ENCODE measurements at regions of chr6 and their contacts with region 1.

Region 1: DNA sequence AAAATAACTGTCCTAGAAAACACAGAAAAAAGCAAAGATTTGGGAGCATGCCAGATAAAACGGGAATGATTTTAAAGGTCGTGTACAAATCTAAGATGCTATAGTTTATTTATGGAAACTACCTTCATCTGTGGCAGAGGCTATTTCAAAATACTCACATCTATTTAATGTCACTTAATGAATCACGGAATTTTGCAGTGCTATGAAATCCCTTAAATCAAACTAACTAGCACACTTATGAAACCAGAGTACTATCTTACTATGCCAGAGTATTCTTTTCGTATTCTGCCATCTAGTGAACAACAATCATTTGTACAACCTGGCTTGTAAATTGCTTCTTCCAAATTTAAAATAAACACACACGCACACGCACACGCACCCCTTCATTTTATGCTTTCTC is 77.9 kb upstream of the BMP5 start:
- DNase-seq: no peak
- ATAC-seq: peak; percentile 60
- H3K4me3 ChIP-seq: no peak overlapping the region
- H3K27ac ChIP-seq: no peak overlapping the region
- H3K4me1 ChIP-seq: no peaks in the 10 kb centered on the region
- H3K27me3 ChIP-seq: no peaks in the 10 kb centered on the region
- CTCF ChIP-seq: peak in 5 of 7 experiments; percentile 39 to 66 (median 56)
- POLR2A ChIP-seq: no peak

Region 2: DNA sequence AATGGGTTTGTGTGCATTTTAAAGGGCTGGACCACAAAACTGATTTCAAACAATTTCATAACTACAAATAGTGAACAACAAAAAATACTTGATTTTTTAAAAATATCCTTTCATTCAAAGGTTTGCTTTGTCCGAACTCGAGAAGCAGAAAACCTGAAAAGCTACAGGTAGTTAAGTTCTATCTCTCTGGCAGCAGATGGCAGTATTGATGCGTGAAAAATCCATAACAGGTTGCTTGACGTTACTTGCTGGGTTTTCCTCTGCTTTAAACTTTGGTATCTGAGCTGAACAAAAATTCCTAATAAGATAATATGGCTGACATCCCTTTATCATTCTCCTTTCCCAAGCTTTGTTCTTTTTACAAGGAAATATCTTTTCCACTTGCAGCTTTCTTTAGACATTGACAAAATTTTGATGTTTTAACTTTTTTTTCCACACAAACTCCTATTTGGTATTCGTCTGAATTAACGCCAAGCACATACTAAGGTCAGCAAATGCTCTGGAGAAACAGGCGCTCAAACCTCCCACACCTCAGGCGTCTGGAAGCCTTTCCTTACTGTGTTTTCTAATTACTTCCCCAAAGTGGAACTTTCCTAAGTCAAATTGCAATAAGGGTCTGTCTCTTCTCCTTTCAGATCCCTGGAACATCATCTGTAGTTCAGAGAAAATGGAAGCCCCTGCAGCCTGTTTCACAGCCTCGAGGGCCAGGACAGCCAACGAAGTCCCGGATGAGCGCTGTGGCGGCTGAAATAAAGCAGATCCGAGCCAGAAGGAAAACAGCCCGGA is 676.4 kb before region 1 on chr6:
- intact Hi-C with region 1: loop called (anchors 10 kb)
- DNase-seq: peak; percentile 9 to 56 (median 22)
- ATAC-seq: peak; percentile 73
- H3K4me3 ChIP-seq: no peak overlapping the region
- H3K27ac ChIP-seq: no peak overlapping the region
- H3K4me1 ChIP-seq: no peaks in the 10 kb centered on the region
- H3K27me3 ChIP-seq: peaks cover 0 to 6% of the 10 kb centered on the region in 2 donors
- CTCF ChIP-seq: peak; percentile 15 to 67 (median 59)
- POLR2A ChIP-seq: no peak

Region 3: DNA sequence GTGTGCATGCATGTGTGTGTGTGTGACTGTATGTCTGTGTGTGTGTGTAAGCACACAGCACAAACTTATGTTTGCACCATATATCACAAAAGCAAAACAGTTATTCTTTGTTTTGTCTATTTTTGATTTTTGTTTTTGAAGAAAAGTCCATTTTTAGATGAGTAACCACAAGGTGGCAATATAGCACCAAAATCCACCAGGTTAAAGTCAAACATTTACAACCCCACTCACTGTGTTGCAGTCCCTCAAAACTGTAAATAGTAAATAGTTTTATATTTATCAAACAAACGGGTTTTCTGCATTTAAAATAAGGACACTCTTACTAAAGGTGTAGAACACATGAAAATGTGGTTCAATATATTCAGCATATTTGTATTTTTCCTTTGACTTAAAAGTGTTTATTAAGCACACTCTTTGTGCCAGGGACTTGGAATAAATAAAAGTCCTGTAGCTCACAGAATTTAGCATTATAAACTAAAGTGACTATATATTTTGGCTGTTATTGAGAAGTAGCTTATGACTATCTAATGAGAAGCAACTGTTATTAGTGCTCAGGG is 507.6 kb before region 1 on chr6:
- intact Hi-C with region 1: loop called (anchors 10 kb)
- DNase-seq: no peak
- ATAC-seq: peak; percentile 47
- H3K4me3 ChIP-seq: no peak overlapping the region
- H3K27ac ChIP-seq: no peak overlapping the region
- H3K4me1 ChIP-seq: peaks cover 22% of the 10 kb centered on the region
- H3K27me3 ChIP-seq: no peaks in the 10 kb centered on the region
- CTCF ChIP-seq: peak in 6 of 7 experiments; percentile 39 to 65 (median 56)
- POLR2A ChIP-seq: no peak

Region 4: GRCh38 chr6:56659721-56660380 is 706.5 kb after region 1 on chr6:
- intact Hi-C with region 1: no loop called
- DNase-seq: no peak
- ATAC-seq: no peak
- H3K4me3 ChIP-seq: no peak overlapping the region
- H3K27ac ChIP-seq: no peak overlapping the region
- H3K4me1 ChIP-seq: peaks cover 9% of the 10 kb centered on the region
- H3K27me3 ChIP-seq: no peaks in the 10 kb centered on the region
- CTCF ChIP-seq: no peak
- POLR2A ChIP-seq: no peak